ENCODE measurements at regions of chr2 and their contacts with region 1.

Region 1: GRCh38 chr2:32442020-32442467 is 85.2 kb downstream of the BIRC6 start:
- DNase-seq: no peak
- H3K4me3 ChIP-seq: no peak overlapping the region
- H3K27ac ChIP-seq: no peak overlapping the region
- H3K4me1 ChIP-seq: no peaks in the 10 kb centered on the region
- H3K27me3 ChIP-seq: no peaks in the 10 kb centered on the region
- CTCF ChIP-seq: no peak
- EP300 ChIP-seq: no peak
- POLR2A ChIP-seq: no peak

Region 2: DNA sequence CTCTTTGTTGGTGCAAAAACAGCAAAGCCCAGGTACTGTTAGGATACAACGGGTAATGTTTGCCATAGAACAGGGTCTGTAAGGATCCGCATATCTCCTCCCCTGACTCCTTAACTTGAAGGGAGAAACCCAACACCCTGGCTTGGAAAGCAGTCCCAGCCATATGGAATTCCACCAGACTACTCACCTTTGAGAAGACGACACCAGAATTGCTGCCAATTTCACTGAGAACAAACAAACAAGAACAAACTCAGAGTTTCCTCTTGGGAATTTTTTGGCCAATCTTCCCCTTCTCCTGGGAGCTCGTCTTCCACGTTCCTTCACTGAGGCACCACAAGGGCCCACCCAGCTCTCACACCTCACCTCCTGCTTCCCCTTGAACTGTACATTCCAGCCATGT is 1253.9 kb before region 1 on chr2:
- intact Hi-C with region 1: no loop called
- DNase-seq: no peak
- H3K4me3 ChIP-seq: no peak overlapping the region
- H3K27ac ChIP-seq: no peak overlapping the region
- H3K4me1 ChIP-seq: no peaks in the 10 kb centered on the region
- H3K27me3 ChIP-seq: no peaks in the 10 kb centered on the region
- CTCF ChIP-seq: no peak
- EP300 ChIP-seq: no peak
- POLR2A ChIP-seq: no peak

Region 3: GRCh38 chr2:32484937-32485336 is 42.9 kb after region 1 on chr2:
- intact Hi-C with region 1: loop called in 1 of 4 experiments (anchors 1 kb)
- DNase-seq: no peak
- H3K4me3 ChIP-seq: no peak overlapping the region
- H3K27ac ChIP-seq: no peak overlapping the region
- H3K4me1 ChIP-seq: no peaks in the 10 kb centered on the region
- H3K27me3 ChIP-seq: no peaks in the 10 kb centered on the region
- CTCF ChIP-seq: no peak
- EP300 ChIP-seq: no peak
- POLR2A ChIP-seq: no peak

Measured in ovary (tissue), 10 donors.